ENCODE measurements at regions of chr15 and their contacts with region 1.

Region 1: GRCh38 chr15:90529371-90530249 is at the start of gene CRTC3:
- DNase-seq: no peak
- ATAC-seq: peak; percentile 89
- H3K4me3 ChIP-seq: peak within 1 kb of the TSS; percentile 71
- H3K27ac ChIP-seq: peak within 1 kb of the TSS; percentile 84
- H3K4me1 ChIP-seq: peaks cover 7% of the 10 kb centered on the region
- H3K27me3 ChIP-seq: no peaks in the 10 kb centered on the region
- CTCF ChIP-seq: 0 out of 6 replicates have a peak, but pooled peaks have one; percentile 1 to 15 (median 6)
- EP300 ChIP-seq: no peak
- POLR2A ChIP-seq: peak; percentile 82
- RAD21 ChIP-seq: no peak
- polyA plus RNA-seq, gene CRTC3: 3.5 to 4.2 TPM

Region 2: DNA sequence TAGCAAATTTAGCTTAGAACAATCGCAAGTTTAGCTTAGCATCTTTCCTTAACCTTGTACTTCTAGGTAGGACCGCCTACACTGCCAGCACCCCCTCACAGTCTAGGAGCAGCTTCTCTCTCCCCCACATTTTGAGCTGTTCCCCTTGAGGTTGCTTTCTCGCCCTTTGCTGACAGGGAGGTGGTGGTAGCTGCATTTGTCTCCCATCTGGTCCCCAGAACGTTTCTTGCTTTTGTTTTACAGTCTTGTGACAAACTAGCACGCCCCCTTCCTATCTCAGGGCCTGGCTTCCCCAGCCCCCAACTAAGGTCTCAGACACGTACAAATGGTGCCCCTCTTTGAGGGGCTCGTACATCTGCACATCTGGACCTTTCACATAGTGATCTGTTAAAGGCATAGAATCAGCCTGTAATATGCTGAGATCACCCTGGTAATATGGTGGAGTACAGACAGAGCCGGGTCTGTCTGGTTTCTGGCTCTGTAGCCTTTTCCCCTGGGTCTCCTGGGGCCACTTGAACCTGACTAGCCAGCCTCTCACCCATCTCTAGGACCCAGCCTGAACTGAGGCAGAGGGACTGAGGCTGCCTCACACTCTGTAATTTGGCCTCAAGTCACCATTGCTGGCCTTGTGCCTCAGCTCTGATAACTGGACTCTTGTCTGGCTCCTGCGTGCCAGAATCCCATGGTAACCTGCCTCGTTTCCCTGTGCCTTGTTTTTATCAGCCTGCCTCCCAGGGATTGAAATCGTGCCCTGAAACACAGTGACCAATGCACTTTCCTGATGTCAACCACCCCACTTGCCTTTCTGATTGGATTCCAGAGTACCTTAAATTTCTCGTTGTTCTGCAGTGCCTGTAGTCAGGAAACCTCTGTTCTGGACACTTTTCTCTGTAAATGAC is 27.8 kb after region 1 on chr15:
- CTCF ChIA-PET with region 1: interaction called, 5 read pairs
- POLR2A ChIA-PET with region 1: interaction called, 8 read pairs
- RAD21 ChIA-PET with region 1: interaction called, 5 read pairs
- SMC1A ChIA-PET with region 1: interaction called, 10 read pairs
- in situ Hi-C with region 1: no loop called
- intact Hi-C with region 1: no loop called
- DNase-seq: no peak
- ATAC-seq: peak; percentile 39
- H3K4me3 ChIP-seq: no peak overlapping the region
- H3K27ac ChIP-seq: peak overlapping the region; percentile 80
- H3K4me1 ChIP-seq: peaks cover 22% of the 10 kb centered on the region
- H3K27me3 ChIP-seq: no peaks in the 10 kb centered on the region
- CTCF ChIP-seq: no peak
- EP300 ChIP-seq: no peak
- POLR2A ChIP-seq: peak; percentile 53
- RAD21 ChIP-seq: no peak

Region 3: GRCh38 chr15:90603893-90604292 is 74.3 kb after region 1 on chr15:
- CTCF ChIA-PET with region 1: interaction called, 13 read pairs
- POLR2A ChIA-PET with region 1: no interaction called
- RAD21 ChIA-PET with region 1: interaction called, 4 read pairs
- SMC1A ChIA-PET with region 1: interaction called, 6 read pairs
- in situ Hi-C with region 1: no loop called
- intact Hi-C with region 1: loop called (anchors 5 kb)
- DNase-seq: no peak
- ATAC-seq: peak; percentile 77
- H3K4me3 ChIP-seq: no peak overlapping the region
- H3K27ac ChIP-seq: no peak overlapping the region
- H3K4me1 ChIP-seq: peaks cover 3% of the 10 kb centered on the region
- H3K27me3 ChIP-seq: no peaks in the 10 kb centered on the region
- CTCF ChIP-seq: peak; percentile 39 to 49 (median 41); a peak in 5 of 6 replicates
- EP300 ChIP-seq: no peak
- POLR2A ChIP-seq: no peak
- RAD21 ChIP-seq: peak; percentile 51

Region 4: DNA sequence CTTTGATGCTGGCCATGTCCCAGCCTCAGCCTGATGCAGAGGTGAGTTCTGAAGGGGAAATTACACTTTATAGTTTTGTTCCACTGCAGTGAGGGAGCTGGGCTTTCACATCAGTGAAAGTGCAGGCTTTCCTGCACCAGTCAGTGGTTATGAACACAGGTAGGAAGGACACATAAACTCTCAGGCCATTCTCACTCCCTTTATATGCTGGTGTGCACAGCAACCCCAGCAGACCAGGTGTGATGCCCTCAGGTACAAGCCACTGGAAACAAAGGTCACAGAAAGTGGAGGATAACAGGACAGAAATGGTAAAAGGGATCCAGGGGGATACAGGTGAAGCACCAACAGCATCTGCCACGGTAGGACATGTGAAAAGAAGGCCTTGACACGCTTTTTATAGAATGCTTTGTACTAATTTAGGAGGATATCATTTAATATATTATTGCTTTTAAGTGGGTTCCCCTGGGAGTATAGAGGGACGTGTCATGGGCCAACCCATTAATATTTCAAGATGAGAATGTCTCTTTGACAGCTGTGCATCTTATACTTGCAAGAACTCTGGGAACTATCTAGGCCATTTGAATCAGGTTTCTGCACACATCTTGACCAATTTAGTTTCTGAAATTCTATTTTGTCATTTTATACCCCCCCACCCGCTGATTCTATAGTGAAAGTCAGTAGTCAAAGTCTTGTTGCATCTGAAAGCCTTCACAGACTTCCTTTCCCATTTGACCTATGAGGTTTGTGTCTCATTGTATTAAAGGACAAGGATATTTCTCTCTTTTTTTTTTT is 162.6 kb after region 1 on chr15:
- CTCF ChIA-PET with region 1: no interaction called
- POLR2A ChIA-PET with region 1: no interaction called
- RAD21 ChIA-PET with region 1: no interaction called
- SMC1A ChIA-PET with region 1: no interaction called
- in situ Hi-C with region 1: no loop called
- intact Hi-C with region 1: loop called (anchors 10 kb)
- DNase-seq: peak; percentile 84
- ATAC-seq: peak; percentile 73
- H3K4me3 ChIP-seq: no peak overlapping the region
- H3K27ac ChIP-seq: peak overlapping the region; percentile 99
- H3K4me1 ChIP-seq: peaks cover 41% of the 10 kb centered on the region
- H3K27me3 ChIP-seq: no peaks in the 10 kb centered on the region
- CTCF ChIP-seq: no peak
- EP300 ChIP-seq: no peak
- POLR2A ChIP-seq: peak; percentile 68
- RAD21 ChIP-seq: peak; percentile 19; the same call in 1 of the 2 replicates

Region 5: DNA sequence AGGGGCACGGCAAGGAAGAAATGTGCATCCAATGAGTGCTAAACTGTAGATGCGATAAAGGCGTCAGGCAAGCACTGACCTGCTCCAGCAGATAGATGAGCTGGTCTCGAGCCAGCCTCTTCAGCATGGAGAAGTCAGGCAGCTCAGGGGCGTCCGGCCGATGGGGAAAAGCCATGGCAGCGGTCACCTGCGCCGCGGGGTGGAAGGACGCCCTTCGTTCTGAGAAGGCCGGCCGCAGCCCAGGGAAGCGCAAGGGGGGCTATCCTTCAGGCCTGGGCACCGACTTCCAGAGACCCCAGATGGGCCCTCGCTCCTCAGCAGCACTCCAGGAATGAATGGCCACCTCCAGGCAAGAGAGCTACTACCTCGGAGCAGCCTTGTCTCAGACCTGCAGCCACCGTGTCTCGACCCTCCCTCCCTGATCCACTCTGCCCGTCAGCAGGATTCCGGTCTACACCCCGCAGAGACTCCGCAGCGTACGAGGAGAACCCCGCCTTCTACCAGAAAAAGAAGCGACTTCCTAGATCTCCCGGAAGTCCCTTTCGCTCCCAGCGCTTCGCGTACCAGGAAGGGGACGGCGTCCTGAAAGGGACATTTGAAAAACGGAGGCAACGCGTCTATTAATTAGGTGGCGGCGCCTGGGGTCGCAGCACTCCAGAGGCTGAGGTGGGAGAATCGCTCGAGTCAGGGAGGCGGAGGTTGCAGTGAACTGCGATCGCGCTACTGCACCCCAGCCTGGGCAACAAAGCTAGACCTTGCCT is 492.6 kb after region 1 on chr15 and contains the start of gene VPS33B:
- CTCF ChIA-PET with region 1: no interaction called
- POLR2A ChIA-PET with region 1: interaction called, 12 read pairs
- RAD21 ChIA-PET with region 1: no interaction called
- SMC1A ChIA-PET with region 1: no interaction called
- in situ Hi-C with region 1: no loop called
- intact Hi-C with region 1: no loop called
- DNase-seq: peak; percentile 63
- ATAC-seq: peak; percentile 86
- H3K4me3 ChIP-seq: peak within 1 kb of the TSS; percentile 93
- H3K27ac ChIP-seq: peak within 1 kb of the TSS; percentile 88
- H3K4me1 ChIP-seq: peaks cover 3% of the 10 kb centered on the region; the same call in 1 of the 2 replicates
- H3K27me3 ChIP-seq: no peaks in the 10 kb centered on the region
- CTCF ChIP-seq: no peak
- EP300 ChIP-seq: no peak
- POLR2A ChIP-seq: peak; percentile 80
- RAD21 ChIP-seq: no peak
- polyA plus RNA-seq, gene VPS33B: 11.8 to 18.6 TPM

Measured in GM12878 (cell line).